ENCODE measurements at regions of chr7 and their contacts with region 1.

Region 1: DNA sequence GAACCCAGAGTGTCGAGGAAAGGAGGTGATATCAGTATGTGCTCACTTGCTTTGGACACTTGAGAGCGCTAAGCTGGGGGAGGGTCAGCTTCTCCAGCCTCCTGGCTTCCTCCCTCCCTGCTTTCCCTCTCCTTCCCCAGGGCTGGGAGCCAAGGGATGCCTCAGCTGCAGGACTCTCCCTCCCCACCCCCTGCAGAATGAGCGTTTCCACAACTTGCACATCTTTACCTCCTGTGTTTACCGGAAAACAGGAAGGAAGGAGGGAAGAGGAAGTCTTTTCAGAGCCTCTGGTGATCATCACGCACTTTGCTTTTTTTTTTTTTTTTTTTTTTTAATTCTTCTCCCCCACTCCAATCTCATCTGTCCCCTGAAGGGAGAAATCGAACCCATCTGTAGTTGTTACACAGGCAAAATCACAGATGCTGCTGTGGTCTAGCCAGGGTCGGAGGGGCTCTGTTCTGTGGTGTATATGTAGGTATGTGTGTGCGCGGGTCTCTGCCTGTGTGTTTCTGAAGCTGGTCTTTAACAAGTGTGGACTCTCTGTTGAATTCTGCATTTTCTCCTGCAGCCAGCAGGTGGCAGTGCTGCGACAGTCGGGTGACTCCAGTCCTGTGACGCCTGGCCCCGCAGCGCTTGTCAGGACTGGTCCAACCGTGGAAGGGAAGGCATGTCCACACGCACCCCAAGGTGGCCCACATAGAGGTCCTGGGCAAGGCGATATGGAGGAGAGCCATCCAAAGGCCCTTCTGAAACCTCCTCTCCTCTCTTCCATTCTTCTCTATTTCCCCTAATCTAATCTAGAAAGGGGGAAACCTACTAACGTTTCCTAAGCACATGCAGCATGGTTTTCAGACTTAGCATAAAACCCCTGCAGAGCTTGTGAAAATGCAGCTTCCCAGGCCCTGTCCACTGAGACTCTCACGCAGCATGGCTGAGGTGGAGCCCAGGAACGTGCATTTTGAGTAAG is 257.6 kb downstream of the PLXNA4 start:
- DNase-seq: peak; percentile 79 to 86
- H3K4me3 ChIP-seq: no peak overlapping the region
- H3K4me3 Mint-ChIP-seq: no peak overlapping the region
- H3K27ac Mint-ChIP-seq: no peak overlapping the region
- H3K4me1 ChIP-seq: no peaks in the 10 kb centered on the region
- H3K4me1 Mint-ChIP-seq: peaks cover 6% of the 10 kb centered on the region
- H3K27me3 ChIP-seq: no peaks in the 10 kb centered on the region; the same call in 1 of the 2 replicates
- H3K27me3 Mint-ChIP-seq: peaks cover 20% of the 10 kb centered on the region
- CTCF ChIP-seq: peak; percentile 92 to 93

Region 2: DNA sequence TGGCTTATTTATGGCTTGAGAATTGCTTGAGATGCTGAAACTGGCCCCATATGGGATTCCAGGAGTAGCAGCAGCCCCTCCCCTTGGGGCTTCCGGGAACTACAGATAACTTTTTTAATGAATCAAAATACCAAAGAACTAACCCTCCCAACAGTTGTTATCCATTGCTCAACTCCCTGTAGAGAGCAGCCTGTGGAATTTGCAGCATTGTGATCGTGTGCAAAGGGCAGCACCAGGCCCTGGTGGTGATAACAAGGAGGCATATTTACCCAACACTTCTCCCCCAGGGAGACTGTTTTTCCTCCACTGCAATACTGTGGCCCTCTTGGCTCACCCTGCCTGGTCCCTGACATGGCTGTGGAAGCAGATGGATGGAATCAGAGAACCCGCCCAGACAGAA is 61.4 kb after region 1 on chr7:
- CTCF ChIA-PET with region 1: no interaction called
- POLR2A ChIA-PET with region 1: no interaction called
- intact Hi-C with region 1: loop called (anchors 1 kb)
- DNase-seq: peak; percentile 73 to 81
- H3K4me3 ChIP-seq: no peak overlapping the region
- H3K4me3 Mint-ChIP-seq: peak overlapping the region; percentile 27
- H3K27ac Mint-ChIP-seq: peak overlapping the region; percentile 91
- H3K4me1 ChIP-seq: peaks cover 73% of the 10 kb centered on the region
- H3K4me1 Mint-ChIP-seq: peaks cover 59% of the 10 kb centered on the region
- H3K27me3 ChIP-seq: no peaks in the 10 kb centered on the region
- H3K27me3 Mint-ChIP-seq: no peaks in the 10 kb centered on the region
- CTCF ChIP-seq: peak in 1 of 2 experiments; percentile 11

Region 3: DNA sequence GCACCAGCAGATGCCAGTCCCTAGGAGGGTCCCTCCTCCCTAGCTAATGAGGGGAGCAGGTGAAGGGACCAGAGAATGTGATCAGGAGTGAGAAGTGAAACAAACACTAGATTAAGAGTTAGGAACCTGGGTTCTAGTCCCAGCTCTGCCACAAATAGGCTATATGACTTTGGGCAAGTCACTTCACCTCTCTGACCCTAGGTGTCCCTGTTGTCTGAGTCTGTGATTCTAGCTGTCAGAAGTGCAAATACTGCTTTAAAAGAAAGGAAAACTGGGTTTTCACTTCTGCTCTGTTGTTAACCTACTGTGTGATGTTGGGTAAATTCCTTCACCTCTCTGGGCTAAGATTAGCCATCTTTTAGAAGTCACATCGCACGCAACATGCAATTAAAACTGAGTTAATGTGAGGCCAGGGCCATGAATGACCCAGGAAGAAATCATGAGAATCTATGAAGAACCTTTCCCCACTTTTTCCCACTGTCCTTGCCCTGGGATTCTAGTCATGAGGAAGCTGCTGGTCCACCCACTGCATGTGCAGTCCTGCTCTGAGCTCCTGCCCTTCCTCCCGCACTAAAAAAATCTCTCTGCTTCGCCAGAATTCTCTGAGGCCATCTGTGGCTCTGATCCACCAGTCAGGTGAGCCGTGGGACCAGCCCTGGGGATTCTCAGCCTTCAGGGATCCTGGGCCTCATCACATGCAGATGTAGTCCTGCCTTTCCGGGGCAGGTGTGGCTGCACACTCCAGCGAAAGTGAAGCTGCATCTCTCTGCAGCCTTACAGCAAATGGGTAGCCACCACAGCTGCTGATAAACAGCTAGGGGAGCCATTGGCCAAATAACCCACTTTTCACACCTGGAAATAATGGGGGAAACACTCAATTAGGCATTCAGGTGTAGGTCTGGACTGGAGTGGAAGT is 75.9 kb after region 1 on chr7:
- CTCF ChIA-PET with region 1: interaction called, 8 read pairs
- POLR2A ChIA-PET with region 1: no interaction called
- intact Hi-C with region 1: loop called (anchors 1 kb)
- DNase-seq: peak in 1 of 2 experiments; percentile 37
- H3K4me3 ChIP-seq: no peak overlapping the region
- H3K4me3 Mint-ChIP-seq: no peak overlapping the region
- H3K27ac Mint-ChIP-seq: no peak overlapping the region
- H3K4me1 ChIP-seq: no peaks in the 10 kb centered on the region
- H3K4me1 Mint-ChIP-seq: no peaks in the 10 kb centered on the region
- H3K27me3 ChIP-seq: no peaks in the 10 kb centered on the region; the same call in 1 of the 2 replicates
- H3K27me3 Mint-ChIP-seq: peaks cover 8% of the 10 kb centered on the region
- CTCF ChIP-seq: peak in 1 of 2 experiments; percentile 40

Region 4: GRCh38 chr7:132500727-132501440 is 182.2 kb after region 1 on chr7:
- CTCF ChIA-PET with region 1: no interaction called
- POLR2A ChIA-PET with region 1: no interaction called
- intact Hi-C with region 1: loop called (anchors 2 kb)
- DNase-seq: peak in 1 of 2 experiments; percentile 36
- H3K4me3 ChIP-seq: no peak overlapping the region
- H3K4me3 Mint-ChIP-seq: no peak overlapping the region
- H3K27ac Mint-ChIP-seq: no peak overlapping the region
- H3K4me1 ChIP-seq: no peaks in the 10 kb centered on the region
- H3K4me1 Mint-ChIP-seq: no peaks in the 10 kb centered on the region
- H3K27me3 ChIP-seq: no peaks in the 10 kb centered on the region
- H3K27me3 Mint-ChIP-seq: peaks cover 17% of the 10 kb centered on the region
- CTCF ChIP-seq: peak in 1 of 2 experiments; percentile 18

Region 5: GRCh38 chr7:132580717-132581285 is 262.2 kb after region 1 on chr7:
- CTCF ChIA-PET with region 1: interaction called, 35 read pairs
- POLR2A ChIA-PET with region 1: no interaction called
- intact Hi-C with region 1: loop called (anchors 1 kb)
- DNase-seq: peak; percentile 78 to 80
- H3K4me3 ChIP-seq: no peak overlapping the region
- H3K4me3 Mint-ChIP-seq: no peak overlapping the region
- H3K27ac Mint-ChIP-seq: no peak overlapping the region
- H3K4me1 ChIP-seq: peaks cover 5% of the 10 kb centered on the region; the same call in 1 of the 2 replicates
- H3K4me1 Mint-ChIP-seq: no peaks in the 10 kb centered on the region
- H3K27me3 ChIP-seq: peaks cover 1% of the 10 kb centered on the region
- H3K27me3 Mint-ChIP-seq: peaks cover 27% of the 10 kb centered on the region
- CTCF ChIP-seq: peak; percentile 76 to 83